Sciatic nerve (tissue), 2 donors: ENCODE measurements at regions of chr7 and their contacts with region 1.

Region 1: GRCh38 chr7:40525764-40526163 is 391.0 kb downstream of the SUGCT start:
- DNase-seq: no peak
- ATAC-seq: no peak

Region 2: GRCh38 chr7:40586197-40586596 is 60.4 kb after region 1 on chr7:
- intact Hi-C with region 1: no loop called
- DNase-seq: no peak
- ATAC-seq: no peak

Region 3: DNA sequence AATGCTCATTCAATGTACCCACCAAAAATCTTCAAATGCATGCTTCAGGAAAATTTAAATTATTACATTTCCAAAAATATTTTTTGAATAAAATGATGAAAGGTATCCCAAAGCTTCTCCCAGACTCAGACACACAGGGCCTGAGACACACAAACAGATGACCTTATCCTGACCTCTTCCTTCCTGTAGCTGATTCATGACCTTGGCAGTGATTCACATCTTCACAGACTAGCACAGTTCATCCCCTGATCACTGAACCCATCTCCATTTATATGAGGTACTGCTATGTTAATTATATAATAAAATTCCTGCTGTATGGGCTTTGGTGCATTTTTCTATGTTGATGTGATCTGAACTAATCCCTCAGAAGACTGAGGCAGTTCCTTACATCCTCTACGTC is 1976.3 kb after region 1 on chr7:
- intact Hi-C with region 1: loop called (anchors 5 kb)
- DNase-seq: no peak
- ATAC-seq: no peak